Posterior cingulate gyrus (tissue), 11 donors: ENCODE measurements at regions of chr21 and their contacts with region 1.

Region 1: DNA sequence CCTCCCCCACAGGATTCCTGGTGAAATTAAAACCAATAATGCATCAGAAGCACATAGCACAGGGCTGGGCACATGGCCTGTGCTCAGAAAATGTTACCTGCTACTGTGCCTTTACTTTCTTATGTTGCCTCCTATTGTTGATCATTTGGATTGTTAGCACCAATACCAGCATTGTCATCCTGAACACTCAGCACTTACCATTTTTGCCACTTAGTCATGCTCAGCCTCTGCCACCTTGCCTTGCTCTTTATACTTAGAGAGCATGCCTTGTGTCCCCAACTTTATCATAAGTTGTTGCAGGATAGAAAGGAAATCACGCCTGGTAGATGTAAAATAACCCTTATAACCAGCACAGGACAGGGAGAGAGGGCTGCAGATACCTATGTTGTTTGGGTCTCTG is 361.0 kb upstream of the RUNX1 start:
- DNase-seq: no peak

Region 2: DNA sequence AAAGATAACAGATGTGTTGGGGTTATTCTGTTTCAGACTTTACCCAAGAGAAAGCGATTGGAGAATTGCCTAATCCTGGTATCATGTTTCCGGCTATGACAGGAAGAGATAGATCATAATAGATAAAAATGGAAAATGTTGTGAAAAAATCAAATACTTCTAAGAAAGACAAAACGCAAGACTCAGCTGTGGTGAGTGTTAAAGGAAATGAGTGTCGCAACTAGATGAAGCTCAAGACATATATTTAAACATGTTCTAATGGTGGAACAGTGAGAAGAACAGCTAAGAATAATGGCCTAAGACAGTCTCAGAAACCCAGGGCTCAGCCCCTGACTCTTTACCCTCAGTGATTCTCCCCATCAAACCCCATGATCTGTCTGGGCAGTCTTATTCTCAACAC is 65.6 kb after region 1 on chr21:
- intact Hi-C with region 1: loop called (anchors 2 kb)
- DNase-seq: no peak